Gastrocnemius medialis (tissue), 4 donors: ENCODE measurements at regions of chr10 and their contacts with region 1.

Region 1: GRCh38 chr10:48656241-48656913 is 28.3 kb upstream of the WDFY4 start:
- DNase-seq: peak; percentile 71 to 84
- ATAC-seq: peak; percentile 92
- H3K4me3 ChIP-seq: peak overlapping the region; percentile 51 to 77 (median 66)
- H3K27ac ChIP-seq: no peak overlapping the region
- H3K4me1 ChIP-seq: peaks cover 3 to 15% of the 10 kb centered on the region in 2 donors
- H3K27me3 ChIP-seq: no peaks in the 10 kb centered on the region
- CTCF ChIP-seq: peak; percentile 78 to 99 (median 95)
- POLR2A ChIP-seq: no peak

Region 2: GRCh38 chr10:48306265-48306869 is 350.0 kb before region 1 on chr10 and contains the start of gene MAPK8:
- in situ Hi-C with region 1: no loop called
- intact Hi-C with region 1: loop called (anchors 5 kb)
- DNase-seq: peak; percentile 82 to 92
- ATAC-seq: peak; percentile 94 to 95
- H3K4me3 ChIP-seq: peak within 1 kb of the TSS; percentile 76 to 81 (median 79)
- H3K27ac ChIP-seq: peak within 1 kb of the TSS; percentile 93 to 98 (median 96)
- H3K4me1 ChIP-seq: peaks cover 34 to 38% of the 10 kb centered on the region in 2 donors
- H3K27me3 ChIP-seq: no peaks in the 10 kb centered on the region
- CTCF ChIP-seq: no peak
- POLR2A ChIP-seq: peak; percentile 96 to 98
- total RNA-seq, gene MAPK8: 25.6 to 52.1 (median 35.4) TPM

Region 3: GRCh38 chr10:48358162-48358561 is 298.2 kb before region 1 on chr10:
- in situ Hi-C with region 1: loop called (anchors 5 to 10 kb)
- intact Hi-C with region 1: loop called (anchors 1 kb)
- DNase-seq: no peak
- ATAC-seq: no peak
- H3K4me3 ChIP-seq: no peak overlapping the region
- H3K27ac ChIP-seq: no peak overlapping the region
- H3K4me1 ChIP-seq: peaks cover 22 to 27% of the 10 kb centered on the region in 2 donors
- H3K27me3 ChIP-seq: no peaks in the 10 kb centered on the region
- CTCF ChIP-seq: no peak
- POLR2A ChIP-seq: no peak

Region 4: DNA sequence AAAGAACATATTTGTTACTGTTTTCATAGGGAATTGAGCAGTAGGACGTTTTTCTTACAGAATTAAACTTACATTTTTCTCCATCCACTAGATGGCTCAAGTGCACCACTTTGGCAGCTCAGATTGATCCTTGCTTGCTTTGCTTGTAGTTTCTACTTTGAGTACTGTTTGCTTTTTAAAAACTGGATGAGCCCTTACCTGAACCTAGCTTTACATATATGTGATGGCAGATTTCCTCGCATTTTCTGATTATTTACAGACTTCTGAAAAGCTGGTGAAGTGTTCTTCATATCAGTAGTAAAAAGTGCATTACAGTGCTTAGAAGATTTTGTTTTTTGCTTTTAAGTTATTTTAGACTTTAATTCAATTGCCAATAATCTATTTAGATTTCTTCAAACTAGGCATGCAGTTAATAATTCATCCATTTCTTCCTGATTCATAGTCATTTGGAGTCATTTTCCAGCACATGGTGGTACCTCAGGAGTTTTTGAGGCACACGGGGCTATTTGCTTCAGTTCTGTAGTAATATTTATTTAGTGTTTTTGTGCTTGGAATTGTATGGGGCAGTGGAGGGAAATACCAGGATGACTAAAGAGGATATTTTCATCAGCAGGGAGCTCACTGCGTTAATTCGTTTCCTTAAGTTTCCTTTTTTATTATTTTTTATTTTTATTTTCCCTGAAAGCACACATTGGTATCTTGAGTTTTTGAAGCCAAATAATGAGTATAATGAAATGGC is 292.6 kb before region 1 on chr10:
- in situ Hi-C with region 1: loop called (anchors 5 to 10 kb)
- intact Hi-C with region 1: loop called (anchors 1 kb)
- DNase-seq: peak; percentile 13 to 16
- ATAC-seq: peak in 1 of 2 donors; percentile 58
- H3K4me3 ChIP-seq: no peak overlapping the region
- H3K27ac ChIP-seq: peak overlapping the region in 2 of 4 donors; percentile 1 to 13
- H3K4me1 ChIP-seq: peaks cover 32 to 49% of the 10 kb centered on the region in 2 donors
- H3K27me3 ChIP-seq: no peaks in the 10 kb centered on the region
- CTCF ChIP-seq: peak; percentile 29 to 72 (median 50)
- POLR2A ChIP-seq: no peak

Region 5: GRCh38 chr10:48551861-48552591 is 104.4 kb before region 1 on chr10:
- in situ Hi-C with region 1: loop called in 3 of 4 experiments (anchors 5 to 10 kb)
- intact Hi-C with region 1: no loop called
- DNase-seq: no peak
- ATAC-seq: no peak
- H3K4me3 ChIP-seq: no peak overlapping the region
- H3K27ac ChIP-seq: no peak overlapping the region
- H3K4me1 ChIP-seq: no peaks in the 10 kb centered on the region
- H3K27me3 ChIP-seq: no peaks in the 10 kb centered on the region
- CTCF ChIP-seq: peak; percentile 21 to 55 (median 46)
- POLR2A ChIP-seq: no peak

Region 6: GRCh38 chr10:48765039-48765438 is 108.7 kb after region 1 on chr10:
- in situ Hi-C with region 1: no loop called
- intact Hi-C with region 1: no loop called
- DNase-seq: no peak
- ATAC-seq: no peak
- H3K4me3 ChIP-seq: no peak overlapping the region
- H3K27ac ChIP-seq: no peak overlapping the region
- H3K4me1 ChIP-seq: no peaks in the 10 kb centered on the region
- H3K27me3 ChIP-seq: no peaks in the 10 kb centered on the region
- CTCF ChIP-seq: no peak
- POLR2A ChIP-seq: no peak

Region 7: GRCh38 chr10:49164559-49165188 is 508.3 kb after region 1 on chr10:
- in situ Hi-C with region 1: loop called in 2 of 4 experiments (anchors 25 kb)
- intact Hi-C with region 1: loop called (anchors 5 kb)
- DNase-seq: no peak
- ATAC-seq: no peak
- H3K4me3 ChIP-seq: no peak overlapping the region
- H3K27ac ChIP-seq: no peak overlapping the region
- H3K4me1 ChIP-seq: no peaks in the 10 kb centered on the region
- H3K27me3 ChIP-seq: no peaks in the 10 kb centered on the region
- CTCF ChIP-seq: peak; percentile 22 to 44 (median 36)
- POLR2A ChIP-seq: no peak

Region 8: DNA sequence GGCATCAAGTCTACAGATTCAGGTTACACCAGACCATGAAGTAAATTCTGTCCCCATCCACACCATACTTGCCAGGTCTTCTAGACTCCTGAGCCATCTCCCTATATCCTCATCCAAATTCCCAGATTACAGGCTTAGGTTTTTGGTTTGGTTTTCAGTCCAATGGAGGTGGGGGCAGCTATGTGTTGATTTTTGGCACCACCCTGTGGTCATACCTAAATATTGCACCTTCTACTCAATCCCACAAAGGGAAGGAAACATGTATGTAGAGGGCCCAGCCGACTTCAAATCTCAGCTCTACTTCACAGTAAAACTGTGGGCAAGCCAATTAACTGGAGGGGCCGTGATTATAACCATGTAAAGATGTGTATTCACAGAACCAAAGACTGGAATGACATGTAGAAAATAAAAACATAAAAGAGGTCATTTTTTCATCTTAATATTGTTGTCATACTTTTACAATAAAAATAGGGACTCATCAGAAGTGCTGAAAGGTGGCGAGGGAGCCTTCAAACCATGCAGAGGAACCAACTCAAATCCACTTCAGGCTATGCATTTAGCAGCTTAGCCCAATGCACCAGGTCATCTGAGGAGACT is 862.7 kb after region 1 on chr10:
- in situ Hi-C with region 1: loop called in 3 of 4 experiments (anchors 25 kb)
- intact Hi-C with region 1: loop called (anchors 5 kb)
- DNase-seq: no peak
- ATAC-seq: peak; percentile 69 to 74
- H3K4me3 ChIP-seq: no peak overlapping the region
- H3K27ac ChIP-seq: no peak overlapping the region
- H3K4me1 ChIP-seq: peaks cover 19 to 26% of the 10 kb centered on the region in 2 donors
- H3K27me3 ChIP-seq: no peaks in the 10 kb centered on the region
- CTCF ChIP-seq: peak; percentile 58 to 69 (median 64)
- POLR2A ChIP-seq: no peak